Activated naive CD4-positive, alpha-beta T cell treated with anti-CD3 and anti-CD28 coated beads, Interleukin-2, amount 10 ng/mL, durations not matched to agents 7 days and 5 days (primary cell): ENCODE measurements at regions of chr1 and their contacts with region 1.

Region 1: GRCh38 chr1:77533660-77534305 is 148.7 kb downstream of the ZZZ3 start:
- DNase-seq: peak; percentile 71
- H3K4me3 Mint-ChIP-seq: no peak overlapping the region
- H3K27ac Mint-ChIP-seq: peak overlapping the region; percentile 4
- H3K4me1 Mint-ChIP-seq: peaks cover 4% of the 10 kb centered on the region
- H3K27me3 Mint-ChIP-seq: no peaks in the 10 kb centered on the region

Region 2: DNA sequence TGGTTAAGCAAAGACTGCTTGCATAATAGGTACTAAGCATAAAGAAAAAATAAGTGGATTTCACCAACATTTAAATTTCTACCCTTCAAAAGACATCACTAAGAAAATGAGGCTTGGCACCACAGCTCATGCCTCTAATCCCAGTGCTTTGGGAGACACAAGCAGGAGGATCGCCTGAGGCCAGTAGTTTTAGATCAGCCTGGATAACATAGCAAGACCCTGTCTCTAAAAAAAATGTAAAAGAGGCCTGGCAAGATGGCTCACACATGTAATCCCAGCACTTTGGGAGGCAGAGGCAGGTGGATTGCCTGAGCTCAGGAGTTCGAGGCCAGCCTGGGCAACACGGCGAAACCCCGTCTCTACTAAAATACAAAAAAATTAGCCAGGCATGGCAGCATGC is 387.5 kb before region 1 on chr1:
- CTCF ChIA-PET with region 1: interaction called, 10 read pairs
- DNase-seq: no peak
- H3K4me3 Mint-ChIP-seq: no peak overlapping the region
- H3K27ac Mint-ChIP-seq: no peak overlapping the region
- H3K4me1 Mint-ChIP-seq: peaks cover 2% of the 10 kb centered on the region
- H3K27me3 Mint-ChIP-seq: no peaks in the 10 kb centered on the region

Region 3: DNA sequence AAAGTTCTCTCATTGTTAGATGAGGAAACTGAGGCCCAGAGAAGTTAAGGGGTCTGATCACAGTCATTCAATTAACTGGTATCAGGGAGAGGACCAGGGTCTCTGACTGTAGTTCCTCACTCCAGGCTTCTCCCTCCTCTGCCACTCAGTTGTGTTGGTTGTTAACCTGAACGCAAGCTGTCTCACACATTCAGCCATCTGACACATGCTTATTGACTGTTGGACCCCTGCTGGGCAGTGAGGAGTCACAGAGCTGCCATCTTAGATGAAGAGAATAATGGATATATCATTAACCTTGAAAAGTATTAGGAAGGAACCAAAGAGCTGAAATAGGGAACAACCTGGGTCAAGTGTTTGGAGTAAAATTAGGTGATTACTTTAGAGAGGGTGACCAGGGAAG is 46.2 kb before region 1 on chr1:
- CTCF ChIA-PET with region 1: no interaction called
- DNase-seq: no peak
- H3K4me3 Mint-ChIP-seq: no peak overlapping the region
- H3K27ac Mint-ChIP-seq: no peak overlapping the region
- H3K4me1 Mint-ChIP-seq: no peaks in the 10 kb centered on the region
- H3K27me3 Mint-ChIP-seq: no peaks in the 10 kb centered on the region